H1 (cell line): ENCODE measurements at regions of chrX and their contacts with region 1.

Region 1: GRCh38 chrX:154717824-154718223 is 33.1 kb downstream of the GAB3 start:
- DNase-seq: no peak
- H3K4me3 ChIP-seq: no peak overlapping the region
- H3K27ac ChIP-seq: no peak overlapping the region
- H3K4me1 ChIP-seq: no peaks in the 10 kb centered on the region
- H3K27me3 ChIP-seq: no peaks in the 10 kb centered on the region
- CTCF ChIP-seq: no peak
- EP300 ChIP-seq: no peak
- POLR2A ChIP-seq: no peak
- RAD21 ChIP-seq: no peak

Region 2: GRCh38 chrX:154748712-154749343 is 31.0 kb after region 1 on chrX:
- CTCF ChIA-PET with region 1: interaction called, 22 read pairs
- POLR2A ChIA-PET with region 1: no interaction called
- DNase-seq: no peak
- H3K4me3 ChIP-seq: no peak overlapping the region
- H3K27ac ChIP-seq: no peak overlapping the region
- H3K4me1 ChIP-seq: no peaks in the 10 kb centered on the region
- H3K27me3 ChIP-seq: peaks cover 8 to 29% (median 27%) of the 10 kb centered on the region in 4 experiments
- CTCF ChIP-seq: peak in 2 of 3 experiments; percentile 59 to 61; a peak in 3 of 4 replicates
- EP300 ChIP-seq: no peak
- POLR2A ChIP-seq: no peak
- RAD21 ChIP-seq: peak; percentile 73 to 76

Region 3: GRCh38 chrX:155026726-155027508 is 309.1 kb after region 1 on chrX and contains the start of gene FUNDC2:
- CTCF ChIA-PET with region 1: no interaction called
- POLR2A ChIA-PET with region 1: no interaction called
- DNase-seq: peak; percentile 46 to 81
- H3K4me3 ChIP-seq: peak within 1 kb of the TSS; percentile 46 to 90 (median 82)
- H3K27ac ChIP-seq: peak within 1 kb of the TSS; percentile 80; the same call in 1 of the 2 replicates
- H3K4me1 ChIP-seq: peaks cover 0 to 3% (median under 1%) of the 10 kb centered on the region in 4 experiments; a peak in 2 of 7 replicates
- H3K27me3 ChIP-seq: no peaks in the 10 kb centered on the region
- CTCF ChIP-seq: no peak
- EP300 ChIP-seq: no peak
- POLR2A ChIP-seq: peak; percentile 42 to 60
- RAD21 ChIP-seq: no peak
- total RNA-seq, gene FUNDC2: 66.0 and 67.7 TPM in 2 replicates